Psoas muscle (tissue), 8 donors: ENCODE measurements at regions of chr5 and their contacts with region 1.

Region 1: DNA sequence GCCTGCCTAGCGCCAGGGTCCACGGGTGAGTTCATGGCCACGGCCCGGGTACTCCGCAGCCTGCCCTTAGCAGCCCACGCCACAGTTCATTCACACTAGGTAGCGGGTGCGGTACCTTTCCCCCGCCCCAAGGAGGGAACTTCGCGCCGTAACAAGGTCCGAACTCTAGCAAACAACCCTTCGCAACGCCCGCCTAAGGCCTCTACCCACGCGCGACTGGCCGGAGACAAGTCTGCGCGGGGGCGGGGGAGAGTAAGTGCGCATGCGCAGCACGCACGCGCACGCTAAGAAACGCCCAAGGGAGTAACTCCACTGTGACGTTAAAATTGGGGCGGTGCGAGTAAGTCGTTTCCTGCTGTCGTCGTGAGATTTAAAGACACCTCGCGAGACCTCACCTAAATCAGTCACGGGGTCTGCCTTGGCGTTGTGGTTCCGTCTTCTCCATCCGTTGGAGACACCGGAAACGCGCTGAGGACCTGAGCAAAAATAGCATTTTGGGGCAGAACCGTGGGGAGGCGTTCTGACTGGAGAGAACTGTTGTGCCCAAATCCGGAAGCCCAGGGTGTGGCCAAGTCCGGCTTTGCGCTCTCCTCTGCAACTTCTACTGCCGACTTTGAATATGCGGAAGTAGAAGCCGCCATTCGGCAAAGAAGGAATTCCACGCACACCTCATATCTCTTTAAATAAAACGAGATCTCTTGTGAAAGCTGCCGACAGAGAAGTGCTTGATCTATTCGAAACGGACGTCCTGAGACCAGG is at the start of gene RAPGEF6:
- DNase-seq: peak; percentile 96 to 97
- ATAC-seq: peak; percentile 94 to 97 (median 96)
- H3K4me3 ChIP-seq: peak within 1 kb of the TSS; percentile 89
- H3K27ac ChIP-seq: peak within 1 kb of the TSS; percentile 95
- H3K4me1 ChIP-seq: peaks cover 43% of the 10 kb centered on the region
- H3K27me3 ChIP-seq: no peaks in the 10 kb centered on the region
- CTCF ChIP-seq: no peak
- total RNA-seq, gene RAPGEF6: 6.9 to 14.1 (median 7.4) TPM

Region 2: DNA sequence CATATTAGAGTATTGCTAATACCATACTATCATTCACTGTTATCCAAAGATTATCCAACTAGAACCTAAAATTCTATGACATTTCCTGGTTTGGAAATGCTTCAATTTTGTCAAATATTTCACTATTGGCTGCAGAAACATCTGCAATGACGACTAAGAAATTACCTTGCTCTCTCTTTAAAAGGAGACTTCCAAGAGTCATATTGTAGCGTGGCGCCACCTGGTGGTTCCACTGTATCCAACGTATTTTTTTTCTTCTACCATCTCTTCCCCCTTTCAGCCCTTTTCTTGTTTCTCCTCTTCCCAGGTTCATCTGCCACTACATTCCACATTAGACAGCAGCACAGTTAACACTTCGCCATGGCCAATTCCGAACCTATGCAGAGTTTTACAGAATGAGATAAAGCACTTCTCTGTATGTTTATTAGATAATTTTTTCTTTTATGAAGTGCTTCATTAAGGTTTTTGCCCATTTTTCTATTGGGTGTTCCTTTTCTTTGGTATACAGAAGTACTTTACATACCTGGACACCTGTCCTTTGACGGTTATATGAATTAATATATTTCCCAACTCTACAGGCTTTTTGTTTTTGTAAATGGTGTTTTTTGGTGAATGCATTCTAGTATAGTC is 217.8 kb before region 1 on chr5:
- intact Hi-C with region 1: no loop called
- DNase-seq: peak; percentile 67 to 78
- ATAC-seq: peak in 3 of 4 donors; percentile 57 to 76 (median 58)
- H3K4me3 ChIP-seq: no peak overlapping the region
- H3K27ac ChIP-seq: no peak overlapping the region
- H3K4me1 ChIP-seq: no peaks in the 10 kb centered on the region
- H3K27me3 ChIP-seq: no peaks in the 10 kb centered on the region
- CTCF ChIP-seq: peak; percentile 81

Region 3: GRCh38 chr5:131595088-131596033 is 39.8 kb before region 1 on chr5:
- intact Hi-C with region 1: loop called in 1 of 2 experiments (anchors 1 kb)
- DNase-seq: no peak
- ATAC-seq: no peak
- H3K4me3 ChIP-seq: no peak overlapping the region
- H3K27ac ChIP-seq: no peak overlapping the region
- H3K4me1 ChIP-seq: peaks cover 9% of the 10 kb centered on the region
- H3K27me3 ChIP-seq: no peaks in the 10 kb centered on the region
- CTCF ChIP-seq: no peak